ENCODE measurements at regions of chr14 and their contacts with region 1.

Region 1: GRCh38 chr14:34931206-34931605 is 51.6 kb upstream of the SRP54 start:
- DNase-seq: peak; percentile 50
- H3K4me3 Mint-ChIP-seq: peak overlapping the region; percentile 64
- H3K27ac Mint-ChIP-seq: peak overlapping the region; percentile 92
- H3K4me1 Mint-ChIP-seq: peaks cover 46% of the 10 kb centered on the region
- H3K27me3 Mint-ChIP-seq: no peaks in the 10 kb centered on the region

Region 2: GRCh38 chr14:34714320-34715126 is 216.7 kb before region 1 on chr14 and contains the start of gene CFL2:
- CTCF ChIA-PET with region 1: no interaction called
- POLR2A ChIA-PET with region 1: no interaction called
- intact Hi-C with region 1: loop called (anchors 2 kb)
- DNase-seq: peak; percentile 79
- H3K4me3 Mint-ChIP-seq: peak within 1 kb of the TSS; percentile 94
- H3K27ac Mint-ChIP-seq: peak within 1 kb of the TSS; percentile 89
- H3K4me1 Mint-ChIP-seq: peaks cover 24% of the 10 kb centered on the region
- H3K27me3 Mint-ChIP-seq: peaks cover 1% of the 10 kb centered on the region
- total RNA-seq, gene CFL2: 7.6 to 8.8 TPM

Region 3: GRCh38 chr14:34857689-34858449 is 73.3 kb before region 1 on chr14:
- CTCF ChIA-PET with region 1: no interaction called
- POLR2A ChIA-PET with region 1: no interaction called
- intact Hi-C with region 1: loop called (anchors 5 kb)
- DNase-seq: peak; percentile 37
- H3K4me3 Mint-ChIP-seq: no peak overlapping the region
- H3K27ac Mint-ChIP-seq: peak overlapping the region; percentile 75
- H3K4me1 Mint-ChIP-seq: peaks cover 31% of the 10 kb centered on the region
- H3K27me3 Mint-ChIP-seq: no peaks in the 10 kb centered on the region

Region 4: DNA sequence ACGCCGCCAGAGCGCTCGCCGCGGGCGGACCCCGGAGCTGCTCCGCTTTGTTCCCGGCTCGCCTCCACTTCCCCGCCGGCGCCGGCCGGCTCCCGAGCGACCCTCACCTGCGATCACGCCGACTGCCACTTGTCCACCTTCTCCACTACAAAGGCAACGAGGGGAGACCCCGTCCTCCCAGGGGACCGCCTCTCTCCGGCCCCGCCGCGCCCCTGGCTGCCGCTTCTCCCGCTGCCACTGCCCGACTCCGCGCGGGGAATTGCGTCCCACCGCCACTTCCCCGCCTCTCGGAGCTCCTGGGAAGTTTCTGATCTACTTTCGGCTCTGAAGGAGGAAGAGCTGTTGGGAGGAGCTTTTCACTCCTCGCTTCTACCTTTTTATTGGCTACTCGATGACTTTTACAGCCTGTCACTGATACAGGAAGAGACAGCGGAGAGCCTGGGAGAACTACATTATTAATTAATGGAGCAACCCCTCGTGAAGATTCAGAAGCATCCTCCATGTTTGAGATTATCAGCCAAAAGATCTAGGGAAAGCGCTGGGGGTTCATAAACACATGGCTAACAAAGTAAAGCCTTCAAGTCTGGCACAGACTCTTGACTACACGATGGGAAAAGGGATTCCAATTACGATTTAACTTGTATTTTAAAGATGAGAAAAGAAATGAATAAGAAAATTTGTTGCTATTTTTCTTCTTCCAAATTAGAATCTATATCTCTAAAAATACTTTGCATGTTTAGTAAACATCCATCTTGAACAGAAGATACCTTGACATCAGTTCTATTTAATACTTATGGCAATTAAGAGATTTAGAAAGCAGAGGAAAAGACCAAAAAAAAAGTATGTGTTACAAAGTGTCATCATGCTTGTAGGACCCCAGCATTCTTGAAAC is 55.9 kb before region 1 on chr14 and contains the start of gene BAZ1A:
- CTCF ChIA-PET with region 1: interaction called, 3 read pairs
- POLR2A ChIA-PET with region 1: interaction called, 5 read pairs
- intact Hi-C with region 1: loop called (anchors 1 kb)
- DNase-seq: peak; percentile 52
- H3K4me3 Mint-ChIP-seq: peak within 1 kb of the TSS; percentile 100
- H3K27ac Mint-ChIP-seq: peak within 1 kb of the TSS; percentile 98
- H3K4me1 Mint-ChIP-seq: peaks cover 33% of the 10 kb centered on the region
- H3K27me3 Mint-ChIP-seq: no peaks in the 10 kb centered on the region
- total RNA-seq, gene BAZ1A: 67.8 to 68.0 TPM

Region 5: GRCh38 chr14:34966413-34966812 is 35.2 kb after region 1 on chr14:
- CTCF ChIA-PET with region 1: interaction called, 4 read pairs
- POLR2A ChIA-PET with region 1: no interaction called
- intact Hi-C with region 1: loop called (anchors 2 kb)
- DNase-seq: no peak
- H3K4me3 Mint-ChIP-seq: no peak overlapping the region
- H3K27ac Mint-ChIP-seq: peak overlapping the region; percentile 61
- H3K4me1 Mint-ChIP-seq: peaks cover 20% of the 10 kb centered on the region
- H3K27me3 Mint-ChIP-seq: no peaks in the 10 kb centered on the region

Region 6: GRCh38 chr14:35046048-35046741 is 115.0 kb after region 1 on chr14 and contains the start of gene FAM177A1:
- CTCF ChIA-PET with region 1: no interaction called
- POLR2A ChIA-PET with region 1: no interaction called
- intact Hi-C with region 1: loop called (anchors 2 kb)
- DNase-seq: peak; percentile 99
- H3K4me3 Mint-ChIP-seq: peak within 1 kb of the TSS; percentile 97
- H3K27ac Mint-ChIP-seq: peak within 1 kb of the TSS; percentile 98
- H3K4me1 Mint-ChIP-seq: peaks cover 28% of the 10 kb centered on the region
- H3K27me3 Mint-ChIP-seq: no peaks in the 10 kb centered on the region
- total RNA-seq, gene FAM177A1: 48.8 to 56.8 TPM

Region 7: GRCh38 chr14:35121887-35122695 is 190.9 kb after region 1 on chr14 and contains the starts of genes PPP2R3C and PRORP:
- CTCF ChIA-PET with region 1: no interaction called
- POLR2A ChIA-PET with region 1: no interaction called
- intact Hi-C with region 1: loop called (anchors 2 kb)
- DNase-seq: peak; percentile 93
- H3K4me3 Mint-ChIP-seq: peak within 1 kb of the TSS; percentile 82
- H3K27ac Mint-ChIP-seq: peak within 1 kb of the TSS; percentile 99
- H3K4me1 Mint-ChIP-seq: peaks cover 55% of the 10 kb centered on the region
- H3K27me3 Mint-ChIP-seq: no peaks in the 10 kb centered on the region
- total RNA-seq, gene PPP2R3C: 48.9 to 51.8 TPM
- total RNA-seq, gene PRORP: 43.4 to 44.6 TPM